ENCODE measurements at regions of chr20 and their contacts with region 1.

Region 1: GRCh38 chr20:2865630-2866029 is 7.7 kb upstream of the PTPRA start:
- DNase-seq: peak; percentile 87
- ATAC-seq: peak; percentile 90
- H3K4me3 Mint-ChIP-seq: peak overlapping the region; percentile 2
- H3K27ac Mint-ChIP-seq: peak overlapping the region; percentile 85
- H3K4me1 Mint-ChIP-seq: peaks cover 49% of the 10 kb centered on the region
- H3K27me3 Mint-ChIP-seq: no peaks in the 10 kb centered on the region
- CTCF ChIP-seq: peak; percentile 48

Region 2: DNA sequence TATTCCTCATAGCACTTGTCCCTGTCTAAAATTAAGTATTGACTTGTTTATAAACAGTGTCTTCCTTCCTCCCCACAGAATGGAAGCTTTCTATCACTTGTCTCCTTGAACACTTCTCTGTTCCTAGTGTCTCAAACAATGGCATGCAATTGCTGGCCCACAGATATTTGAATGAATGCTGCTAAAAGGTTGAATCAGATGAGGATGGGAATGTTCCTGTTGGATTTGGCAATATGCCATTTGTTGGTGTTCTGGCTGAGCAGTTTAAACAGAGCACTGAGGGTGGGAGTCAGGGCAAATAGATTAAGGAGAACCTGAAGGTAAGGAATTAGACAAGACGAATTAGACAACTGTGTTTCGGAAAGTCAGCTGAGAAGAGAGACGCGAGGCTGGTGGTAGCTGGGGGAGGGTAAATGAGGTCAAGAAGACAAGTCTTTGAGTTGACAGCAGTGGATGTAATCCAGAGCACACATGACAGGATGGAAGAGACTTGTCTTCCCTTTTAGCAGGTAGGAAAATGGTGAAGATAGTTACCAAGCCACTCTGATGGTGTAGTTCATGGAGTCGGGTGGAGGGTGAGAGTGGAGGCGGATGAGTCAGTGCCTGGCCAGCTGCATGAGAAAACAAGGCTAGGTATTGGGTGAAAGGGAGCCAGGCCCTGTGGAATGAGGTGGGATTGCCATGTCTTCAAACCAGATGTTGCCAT is 119.5 kb after region 1 on chr20:
- CTCF ChIA-PET with region 1: interaction called, 4 read pairs
- POLR2A ChIA-PET with region 1: interaction called, 3 read pairs
- intact Hi-C with region 1: loop called (anchors 5 kb)
- DNase-seq: peak; percentile 72
- ATAC-seq: no peak
- H3K4me3 Mint-ChIP-seq: no peak overlapping the region
- H3K27ac Mint-ChIP-seq: no peak overlapping the region
- H3K4me1 Mint-ChIP-seq: peaks cover 19% of the 10 kb centered on the region
- H3K27me3 Mint-ChIP-seq: no peaks in the 10 kb centered on the region
- CTCF ChIP-seq: no peak

Region 3: DNA sequence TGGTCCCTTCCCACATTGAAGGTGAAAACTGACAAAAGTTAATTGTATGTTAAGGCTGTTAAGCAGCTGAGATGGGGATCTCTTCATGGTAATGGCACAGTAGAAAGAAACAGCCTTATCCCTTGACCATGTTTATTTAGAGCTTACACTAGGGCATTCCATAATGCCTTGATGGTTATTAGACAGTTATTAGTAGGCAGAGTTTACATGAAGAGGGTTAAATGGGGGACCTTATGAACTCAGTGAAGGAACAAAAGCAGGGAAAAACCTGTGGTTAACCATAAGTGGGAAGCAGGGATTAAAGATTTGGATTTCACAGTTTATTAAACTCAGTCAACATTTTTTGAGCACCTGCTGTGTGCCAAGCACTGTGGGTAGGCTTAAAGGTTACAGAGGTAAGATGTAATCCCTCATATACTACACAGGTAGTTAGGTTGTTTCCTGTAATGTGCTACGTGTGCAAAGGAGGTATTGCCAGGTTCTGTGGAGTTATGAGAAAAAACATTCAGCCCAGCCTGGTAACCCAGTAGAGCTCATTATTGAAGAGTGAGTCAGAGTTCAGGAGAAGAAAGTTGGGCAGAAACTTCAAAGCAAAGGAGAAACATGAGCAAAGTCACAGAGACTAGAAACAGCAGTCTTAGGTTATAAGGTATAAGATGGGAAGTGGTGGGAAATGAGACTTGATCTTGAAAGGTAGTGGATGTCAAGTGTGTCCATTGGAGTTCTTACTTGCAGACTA is 145.5 kb after region 1 on chr20:
- CTCF ChIA-PET with region 1: interaction called, 11 read pairs
- POLR2A ChIA-PET with region 1: no interaction called
- intact Hi-C with region 1: no loop called
- DNase-seq: peak; percentile 38
- ATAC-seq: peak; percentile 78
- H3K4me3 Mint-ChIP-seq: peak overlapping the region; percentile 8
- H3K27ac Mint-ChIP-seq: peak overlapping the region; percentile 90
- H3K4me1 Mint-ChIP-seq: peaks cover 52% of the 10 kb centered on the region
- H3K27me3 Mint-ChIP-seq: no peaks in the 10 kb centered on the region
- CTCF ChIP-seq: no peak

Measured in activated CD8-positive, alpha-beta T cell treated with anti-CD3 and anti-CD28 coated beads for 36 hours (primary cell).